Gastrocnemius medialis (tissue), 4 donors: ENCODE measurements at regions of chr7 and their contacts with region 1.

Region 1: DNA sequence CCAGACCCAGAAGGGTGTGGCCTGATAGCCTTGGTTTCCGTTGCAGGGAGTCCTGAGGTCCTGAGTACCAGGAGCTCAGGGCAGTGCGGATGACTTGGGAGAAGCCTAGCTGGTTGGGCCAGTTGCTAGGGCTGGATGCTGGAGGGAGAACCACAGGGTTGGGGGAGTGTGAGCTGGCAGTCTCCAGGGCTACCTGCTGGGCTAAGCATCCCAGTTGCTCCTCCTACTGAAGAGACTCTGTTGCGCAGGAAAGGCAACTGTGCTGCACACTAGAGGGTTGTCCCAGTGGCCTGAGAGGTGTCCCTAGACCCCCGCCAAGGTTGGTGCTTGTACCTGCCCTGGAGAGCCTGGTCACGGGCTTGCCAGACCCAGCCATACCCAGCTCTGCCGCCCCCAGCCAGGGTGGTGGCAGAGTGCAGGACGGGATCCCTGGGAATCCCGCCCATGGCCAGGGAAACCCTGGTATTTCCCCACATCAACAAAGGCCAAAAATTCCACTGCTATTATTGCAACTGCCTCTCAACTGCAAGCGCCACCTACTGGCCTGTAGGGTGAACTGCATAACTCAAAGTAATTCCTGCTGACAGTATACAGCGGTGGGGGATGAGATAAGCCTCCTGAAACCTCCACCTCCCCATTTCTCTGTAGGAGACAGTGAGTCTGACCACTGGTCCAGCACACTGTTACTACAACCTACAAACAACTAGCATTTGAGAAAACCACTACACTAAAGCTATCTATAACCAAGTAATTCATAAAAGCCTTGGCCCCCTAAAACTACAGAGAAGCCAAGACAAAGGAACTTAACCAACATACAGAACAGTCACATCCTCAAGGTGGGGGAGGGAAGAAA is 67.6 kb upstream of the DDC start:
- DNase-seq: peak in 1 of 2 donors; percentile 68
- ATAC-seq: peak in 1 of 2 donors; percentile 50
- H3K4me3 ChIP-seq: no peak overlapping the region
- H3K27ac ChIP-seq: peak overlapping the region; percentile 77 to 93 (median 82)
- H3K4me1 ChIP-seq: peaks cover 60 to 79% of the 10 kb centered on the region in 2 donors
- H3K27me3 ChIP-seq: no peaks in the 10 kb centered on the region
- CTCF ChIP-seq: peak; percentile 75 to 91 (median 81)
- POLR2A ChIP-seq: no peak

Region 2: DNA sequence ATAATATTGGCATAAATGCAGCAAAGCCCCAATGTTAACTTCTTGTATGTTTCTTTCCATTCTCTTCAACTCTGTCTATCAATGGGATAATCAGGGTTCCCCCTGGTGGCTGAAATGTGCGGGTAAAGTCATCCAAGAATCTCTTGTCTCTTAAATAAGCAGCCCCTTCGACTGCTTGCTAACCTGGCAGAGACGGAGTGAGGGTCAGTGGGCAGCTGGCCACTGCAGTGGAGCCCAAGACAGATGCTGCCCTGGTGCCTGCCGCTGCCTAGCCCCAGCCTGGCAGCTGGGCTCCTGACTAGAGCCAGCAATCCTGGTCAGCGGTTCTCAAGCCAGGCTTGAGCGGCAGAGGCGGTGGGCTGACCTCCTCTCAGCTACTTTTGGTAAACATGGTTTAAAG is 435.0 kb after region 1 on chr7:
- in situ Hi-C with region 1: no loop called
- intact Hi-C with region 1: loop called (anchors 5 kb)
- DNase-seq: peak in 1 of 2 donors; percentile 36
- ATAC-seq: peak; percentile 57 to 58
- H3K4me3 ChIP-seq: no peak overlapping the region
- H3K27ac ChIP-seq: no peak overlapping the region
- H3K4me1 ChIP-seq: peaks cover 6 to 8% of the 10 kb centered on the region in 2 donors
- H3K27me3 ChIP-seq: no peaks in the 10 kb centered on the region
- CTCF ChIP-seq: peak; percentile 58 to 77 (median 72)
- POLR2A ChIP-seq: no peak